ENCODE measurements at regions of chrX and their contacts with region 1.

Region 1: DNA sequence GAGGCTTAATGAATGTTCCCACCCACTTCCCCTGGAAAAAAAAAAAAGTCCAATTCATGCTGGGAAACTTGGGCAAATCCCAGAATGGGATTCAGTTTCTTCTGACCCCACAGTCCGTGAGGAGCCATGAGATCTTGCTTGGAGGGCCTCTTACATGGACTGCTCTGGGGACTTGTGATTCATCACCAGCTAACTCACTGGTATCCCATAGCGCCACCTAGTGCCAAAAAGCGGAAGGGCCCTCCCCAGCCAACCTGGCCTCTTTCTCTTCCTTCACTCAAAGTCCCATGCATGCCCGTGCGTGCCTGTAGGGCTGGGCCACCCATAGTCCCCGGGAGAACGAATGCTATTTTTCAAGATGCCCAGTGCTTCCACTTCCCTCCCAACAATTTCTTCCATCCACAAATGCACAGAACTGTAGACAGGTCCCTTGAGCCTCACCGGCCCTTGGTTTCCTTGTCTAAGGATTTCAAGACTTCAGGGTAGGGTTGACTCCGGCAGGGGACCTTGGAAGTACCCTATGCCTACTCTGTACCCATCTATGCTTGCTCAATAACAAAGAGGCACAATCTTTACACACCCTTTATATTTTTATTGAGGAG is 5.1 kb downstream of the RTL5 start:
- DNase-seq: peak; percentile 79 to 89 (median 87)
- H3K4me3 ChIP-seq: no peak overlapping the region
- H3K27ac ChIP-seq: peak overlapping the region in 1 of 2 donors; percentile 42
- H3K4me1 ChIP-seq: no peaks in the 10 kb centered on the region
- H3K27me3 ChIP-seq: no peaks in the 10 kb centered on the region
- CTCF ChIP-seq: peak; percentile 32 to 75 (median 72)
- EP300 ChIP-seq: no peak
- POLR2A ChIP-seq: peak; percentile 26

Region 2: DNA sequence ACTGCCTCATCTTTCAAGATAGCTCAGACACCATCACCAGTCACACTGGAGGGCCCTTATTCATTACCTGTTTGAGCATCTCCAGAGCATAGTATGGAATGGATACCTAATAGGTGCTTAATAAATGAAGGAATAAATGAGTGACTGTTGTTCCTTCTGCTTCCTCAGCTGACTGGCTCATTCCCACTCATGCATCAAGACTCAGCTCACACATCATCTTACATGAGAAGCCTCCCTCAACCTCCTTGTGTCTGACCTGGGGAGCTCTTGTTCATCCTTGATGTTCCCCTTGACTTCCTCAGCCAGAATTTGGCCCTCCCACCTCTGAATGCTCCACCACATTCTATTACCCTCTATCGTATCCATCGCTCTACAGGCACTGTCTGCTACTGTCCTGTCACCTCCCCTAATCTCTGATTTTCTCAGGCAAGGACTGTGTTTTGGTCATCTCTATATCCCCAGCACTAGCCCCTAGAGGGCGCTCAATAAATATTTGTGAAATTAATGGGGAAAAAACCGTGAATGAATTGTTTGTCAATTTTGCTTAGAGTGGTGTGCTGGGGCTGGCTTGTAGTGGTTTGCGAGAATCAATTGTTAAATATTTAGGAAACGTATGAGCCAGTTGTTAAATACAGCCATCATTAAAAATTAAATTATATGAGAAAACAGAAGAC is 127.7 kb before region 1 on chrX:
- intact Hi-C with region 1: loop called in 2 of 4 experiments (anchors 5 kb)
- DNase-seq: peak in 2 of 5 donors; percentile 44 to 54
- H3K4me3 ChIP-seq: no peak overlapping the region
- H3K27ac ChIP-seq: no peak overlapping the region
- H3K4me1 ChIP-seq: no peaks in the 10 kb centered on the region
- H3K27me3 ChIP-seq: no peaks in the 10 kb centered on the region
- CTCF ChIP-seq: peak; percentile 20 to 49 (median 42)
- EP300 ChIP-seq: no peak
- POLR2A ChIP-seq: no peak

Region 3: GRCh38 chrX:72003811-72004750 is 122.6 kb before region 1 on chrX:
- intact Hi-C with region 1: loop called in 2 of 4 experiments (anchors 5 kb)
- DNase-seq: peak; percentile 26 to 50 (median 37)
- H3K4me3 ChIP-seq: no peak overlapping the region
- H3K27ac ChIP-seq: peak overlapping the region in 1 of 2 donors; percentile 11
- H3K4me1 ChIP-seq: no peaks in the 10 kb centered on the region
- H3K27me3 ChIP-seq: no peaks in the 10 kb centered on the region
- CTCF ChIP-seq: no peak
- EP300 ChIP-seq: no peak
- POLR2A ChIP-seq: no peak

Region 4: DNA sequence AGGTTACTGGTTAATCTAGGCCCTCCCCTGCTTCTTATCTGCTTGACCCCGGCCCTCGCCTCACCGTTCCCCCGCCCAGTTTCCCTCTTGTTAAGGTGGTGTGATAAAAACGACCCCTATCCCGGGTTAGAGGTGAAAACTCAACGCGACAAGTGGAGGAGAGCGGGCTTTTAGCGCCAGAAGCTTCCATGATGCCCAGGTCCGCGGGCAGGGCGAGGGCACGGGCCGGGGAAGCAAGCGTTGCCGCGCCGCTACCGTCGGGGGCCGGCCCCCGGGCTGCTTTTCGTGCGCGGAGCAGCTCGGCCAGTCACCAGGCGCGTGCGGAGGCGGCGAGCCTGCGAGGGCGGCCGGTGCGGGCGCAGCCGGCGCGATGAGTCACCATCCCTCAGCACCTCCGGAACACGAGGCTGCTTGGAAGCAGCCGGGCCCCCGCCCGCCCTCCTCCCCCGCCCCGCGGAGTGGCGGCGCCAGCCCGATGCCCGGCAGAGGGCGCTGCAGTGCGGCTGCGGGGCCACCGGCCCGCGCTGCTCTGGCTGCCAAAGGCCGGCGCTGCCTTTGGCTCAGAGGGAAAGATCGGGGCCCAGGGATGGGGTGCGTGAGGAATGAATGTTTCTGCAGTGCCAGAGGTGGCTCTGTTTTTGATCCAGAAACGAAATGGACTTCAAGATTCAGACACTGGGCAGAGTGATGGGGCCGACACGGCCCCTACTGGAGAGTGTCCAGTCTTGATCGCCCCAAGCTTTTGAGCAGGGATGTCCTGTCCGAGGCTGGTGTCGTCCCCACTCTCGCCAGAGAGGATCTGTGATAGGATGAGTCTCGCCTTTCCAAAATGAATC is 108.1 kb before region 1 on chrX:
- intact Hi-C with region 1: loop called (anchors 2 to 5 kb)
- DNase-seq: peak; percentile 87 to 92 (median 89)
- H3K4me3 ChIP-seq: no peak overlapping the region
- H3K27ac ChIP-seq: peak overlapping the region; percentile 16 to 48
- H3K4me1 ChIP-seq: no peaks in the 10 kb centered on the region
- H3K27me3 ChIP-seq: no peaks in the 10 kb centered on the region
- CTCF ChIP-seq: peak; percentile 48 to 78 (median 72)
- EP300 ChIP-seq: no peak
- POLR2A ChIP-seq: no peak

Region 5: DNA sequence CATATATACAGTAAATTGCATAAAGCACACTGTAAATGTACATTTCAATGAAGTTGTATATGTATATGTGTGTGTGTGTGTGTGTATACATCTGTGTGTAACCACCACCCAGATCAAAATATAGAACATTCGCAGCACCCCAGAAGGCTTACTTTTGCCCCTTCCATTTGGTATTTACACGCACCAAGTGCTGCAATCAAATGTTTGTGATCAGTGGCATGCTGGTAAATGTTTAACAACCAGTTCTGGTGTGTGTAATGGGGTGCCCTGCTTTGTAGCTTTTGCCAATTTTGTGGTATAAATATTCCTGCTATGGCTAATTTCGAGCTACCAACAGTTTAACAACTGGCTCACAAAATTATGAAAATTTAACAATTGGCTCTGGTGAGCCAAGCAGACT is 96.2 kb before region 1 on chrX:
- intact Hi-C with region 1: no loop called
- DNase-seq: no peak
- H3K4me3 ChIP-seq: no peak overlapping the region
- H3K27ac ChIP-seq: no peak overlapping the region
- H3K4me1 ChIP-seq: no peaks in the 10 kb centered on the region
- H3K27me3 ChIP-seq: no peaks in the 10 kb centered on the region
- CTCF ChIP-seq: no peak
- EP300 ChIP-seq: no peak
- POLR2A ChIP-seq: no peak

Region 6: GRCh38 chrX:72100824-72101351 is 25.8 kb before region 1 on chrX:
- intact Hi-C with region 1: no loop called
- DNase-seq: no peak
- H3K4me3 ChIP-seq: no peak overlapping the region
- H3K27ac ChIP-seq: no peak overlapping the region
- H3K4me1 ChIP-seq: no peaks in the 10 kb centered on the region
- H3K27me3 ChIP-seq: no peaks in the 10 kb centered on the region
- CTCF ChIP-seq: no peak
- EP300 ChIP-seq: no peak
- POLR2A ChIP-seq: no peak

Measured in ovary (tissue), 10 donors.